PC-3 (cell line): ENCODE measurements at regions of chr6 and their contacts with region 1.

Region 1: DNA sequence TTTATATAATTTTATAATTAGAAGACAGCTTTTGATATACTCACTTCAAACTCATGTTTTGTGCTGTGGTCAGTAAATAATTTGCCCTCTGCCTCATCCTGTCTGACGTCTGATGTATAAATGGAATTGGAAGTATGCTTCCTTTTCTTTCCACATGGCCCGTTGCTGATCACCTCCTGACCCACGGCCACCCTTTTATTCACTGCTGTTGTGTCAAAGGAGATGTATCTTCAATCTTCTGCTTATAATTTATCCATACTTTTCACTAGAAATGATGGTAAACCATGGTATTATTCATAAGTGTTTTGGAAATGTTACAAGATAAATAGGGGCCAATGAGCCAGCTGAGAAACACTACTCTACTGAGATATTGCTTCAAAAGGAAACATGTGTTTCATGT is 841.8 kb downstream of the PHF3 start:
- DNase-seq: no peak
- ATAC-seq: no peak
- H3K4me3 ChIP-seq: no peak overlapping the region
- H3K27ac ChIP-seq: no peak overlapping the region
- H3K4me1 ChIP-seq: no peaks in the 10 kb centered on the region
- H3K27me3 ChIP-seq: no peaks in the 10 kb centered on the region
- CTCF ChIP-seq: no peak

Region 2: GRCh38 chr6:64732888-64733287 is 255.5 kb after region 1 on chr6:
- CTCF ChIA-PET with region 1: no interaction called
- POLR2A ChIA-PET with region 1: no interaction called
- intact Hi-C with region 1: loop called (anchors 5 kb)
- DNase-seq: peak; percentile 53
- ATAC-seq: peak; percentile 61
- H3K4me3 ChIP-seq: no peak overlapping the region
- H3K27ac ChIP-seq: no peak overlapping the region
- H3K4me1 ChIP-seq: 0 out of 2 replicates have a peak, but pooled peaks cover 3% of the 10 kb centered on the region
- H3K27me3 ChIP-seq: no peaks in the 10 kb centered on the region
- CTCF ChIP-seq: peak; percentile 67